ENCODE measurements at regions of chr11 and their contacts with region 1.

Region 1: DNA sequence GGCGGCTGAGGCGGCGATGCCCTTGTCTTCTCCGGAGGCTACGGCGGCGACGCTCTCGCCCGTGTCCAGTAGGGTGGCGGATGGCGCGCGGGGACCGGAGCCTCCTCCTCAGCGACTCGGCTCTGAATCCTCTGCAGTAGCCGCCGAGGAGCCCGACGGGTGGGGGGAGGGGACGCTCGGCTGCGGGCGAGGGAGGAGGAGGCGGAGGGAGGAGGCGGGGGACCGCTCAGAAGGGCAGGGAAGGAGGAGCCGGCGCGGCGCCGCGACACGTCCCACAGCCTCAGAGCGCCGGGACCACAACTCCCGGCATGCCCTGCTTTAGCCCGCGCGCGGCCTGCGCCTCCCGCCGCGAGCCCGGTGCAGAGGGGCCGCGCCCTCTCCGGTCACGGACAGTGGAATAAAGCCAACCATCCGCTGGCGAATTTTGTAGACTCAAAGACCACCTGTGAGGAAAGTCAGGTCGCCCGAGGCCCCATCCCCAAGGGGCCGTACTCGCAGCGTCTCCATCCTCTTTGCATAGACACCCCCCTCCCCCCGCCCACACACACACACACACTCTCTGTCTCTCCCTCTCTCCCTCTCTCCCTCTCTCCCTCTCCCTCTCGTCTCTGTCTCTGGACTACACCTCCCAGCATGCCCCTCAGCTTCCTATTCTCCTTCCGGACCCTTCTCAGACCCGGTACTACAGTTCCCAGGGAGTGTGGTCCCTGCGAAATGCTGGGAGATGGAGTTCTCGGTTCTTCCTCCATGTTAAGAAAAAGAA is at the start of gene FAM168A:
- DNase-seq: peak; percentile 88
- H3K4me3 Mint-ChIP-seq: peak within 1 kb of the TSS; percentile 93
- H3K27ac Mint-ChIP-seq: peak within 1 kb of the TSS; percentile 94
- H3K4me1 Mint-ChIP-seq: peaks cover 37% of the 10 kb centered on the region
- H3K27me3 Mint-ChIP-seq: peaks cover 2% of the 10 kb centered on the region
- total RNA-seq, gene FAM168A: 19.4 and 19.5 TPM in 2 replicates

Region 2: DNA sequence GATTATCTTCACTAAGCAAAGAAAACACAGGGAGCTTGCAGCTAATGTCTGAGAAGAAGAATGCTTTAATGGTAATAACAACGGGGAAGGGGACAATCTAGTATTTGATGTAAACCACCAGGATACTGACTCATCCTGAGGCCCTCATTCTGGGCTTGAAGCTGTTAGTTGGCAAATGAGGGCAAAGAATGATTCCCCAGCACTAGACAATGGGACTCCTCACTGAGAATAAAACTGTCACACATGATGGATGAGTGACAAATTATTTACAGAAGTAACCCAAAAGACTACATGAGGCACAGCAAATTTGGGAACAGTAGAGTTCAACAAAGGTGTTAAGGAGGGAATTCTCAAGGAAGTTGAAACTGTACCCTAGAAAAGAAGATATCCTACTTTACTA is 76.5 kb before region 1 on chr11:
- intact Hi-C with region 1: loop called (anchors 5 kb)
- DNase-seq: no peak
- H3K4me3 Mint-ChIP-seq: peak overlapping the region; percentile 23
- H3K27ac Mint-ChIP-seq: peak overlapping the region; percentile 64
- H3K4me1 Mint-ChIP-seq: peaks cover 35% of the 10 kb centered on the region
- H3K27me3 Mint-ChIP-seq: no peaks in the 10 kb centered on the region

Region 3: DNA sequence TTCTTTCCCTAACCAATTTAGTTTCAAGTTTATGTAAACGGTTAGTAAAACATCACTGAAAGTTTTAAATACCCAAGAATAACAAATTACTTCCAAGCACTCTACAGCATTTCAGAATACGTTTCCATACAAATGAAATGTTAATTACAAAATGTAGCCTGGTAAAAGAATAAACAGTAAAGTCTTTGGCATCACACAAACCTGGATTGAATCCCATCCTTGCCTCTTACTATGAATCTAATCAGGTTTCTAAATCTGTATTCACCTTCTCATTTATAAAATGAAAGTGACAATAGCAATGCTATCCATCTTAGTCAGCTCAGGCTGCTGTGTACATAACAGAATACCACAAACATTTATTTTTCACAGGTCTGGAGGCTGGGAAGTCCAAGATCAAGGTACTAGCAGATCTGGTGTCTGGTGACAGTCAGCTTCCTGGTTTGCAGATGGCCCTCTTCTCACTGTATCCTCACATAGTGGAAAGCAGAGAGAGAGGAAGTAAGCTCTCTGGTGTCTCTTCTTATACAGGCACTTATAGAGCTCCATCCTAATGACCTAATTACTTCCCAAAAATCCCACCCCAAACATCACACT is 19.4 kb before region 1 on chr11:
- intact Hi-C with region 1: loop called (anchors 1 kb)
- DNase-seq: no peak
- H3K4me3 Mint-ChIP-seq: no peak overlapping the region
- H3K27ac Mint-ChIP-seq: peak overlapping the region; percentile 52
- H3K4me1 Mint-ChIP-seq: peaks cover 28% of the 10 kb centered on the region
- H3K27me3 Mint-ChIP-seq: no peaks in the 10 kb centered on the region

Region 4: GRCh38 chr11:73760679-73761402 is 162.7 kb after region 1 on chr11 and contains the start of gene RAB6A:
- intact Hi-C with region 1: loop called (anchors 1 kb)
- DNase-seq: peak; percentile 100
- H3K4me3 Mint-ChIP-seq: peak within 1 kb of the TSS; percentile 98
- H3K27ac Mint-ChIP-seq: peak within 1 kb of the TSS; percentile 97
- H3K4me1 Mint-ChIP-seq: peaks cover 41% of the 10 kb centered on the region
- H3K27me3 Mint-ChIP-seq: peaks cover 3% of the 10 kb centered on the region
- total RNA-seq, gene RAB6A: 81.9 and 88.0 TPM in 2 replicates

Region 5: GRCh38 chr11:73876424-73877300 is 278.5 kb after region 1 on chr11 and contains the starts of genes COA4 and PAAF1:
- intact Hi-C with region 1: loop called (anchors 1 kb)
- DNase-seq: peak; percentile 92
- H3K4me3 Mint-ChIP-seq: peak within 1 kb of the TSS; percentile 93
- H3K27ac Mint-ChIP-seq: peak within 1 kb of the TSS; percentile 100
- H3K4me1 Mint-ChIP-seq: peaks cover 30% of the 10 kb centered on the region
- H3K27me3 Mint-ChIP-seq: no peaks in the 10 kb centered on the region
- total RNA-seq, gene COA4: 99.1 and 102 TPM in 2 replicates
- total RNA-seq, gene PAAF1: 22.4 and 25.0 TPM in 2 replicates

Region 6: DNA sequence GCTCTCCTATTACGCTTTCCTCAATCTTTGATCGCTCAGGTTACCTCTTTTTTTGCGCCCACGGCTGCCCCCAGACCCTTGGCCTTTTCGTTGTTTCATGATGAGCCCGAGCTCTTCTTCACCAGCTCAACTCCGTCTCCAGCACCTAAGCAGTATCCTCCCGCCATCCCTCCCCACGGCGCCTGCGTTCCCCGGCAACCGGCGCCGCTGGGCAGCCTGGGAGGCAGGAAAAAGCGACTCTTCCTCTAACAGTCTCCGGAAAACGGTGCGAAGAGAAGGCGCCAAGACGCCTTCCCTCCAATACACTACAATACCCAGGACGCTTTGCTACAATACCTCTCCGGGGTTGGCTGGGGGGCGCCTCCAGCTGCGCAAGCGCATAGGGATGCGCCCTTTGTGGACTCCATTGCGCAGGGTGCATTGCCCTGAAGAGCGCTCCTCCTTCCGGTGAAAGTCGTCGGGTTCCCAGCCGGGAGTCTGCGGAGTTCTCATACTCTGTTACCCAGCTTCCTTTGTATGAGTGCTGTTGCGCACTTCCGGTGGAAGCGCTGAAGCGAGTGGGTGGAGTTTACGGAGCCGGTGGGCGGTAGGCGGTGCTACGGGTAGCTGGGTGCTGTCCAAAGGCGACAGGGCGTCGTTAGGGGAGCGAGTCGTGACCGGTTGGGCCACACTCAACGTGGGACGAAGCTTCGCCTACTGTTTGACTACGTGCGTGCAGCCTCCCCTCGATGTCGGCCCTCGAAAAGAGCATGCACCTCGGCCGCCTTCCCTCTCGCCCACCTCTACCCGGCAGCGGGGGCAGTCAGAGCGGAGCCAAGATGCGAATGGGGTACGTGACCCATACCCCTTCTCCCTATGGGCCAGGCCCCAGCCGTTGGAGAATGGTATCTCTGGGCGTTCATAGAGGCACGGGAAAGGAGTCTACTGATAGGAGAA is 572.8 kb after region 1 on chr11 and contains the starts of genes C2CD3 and PPME1:
- intact Hi-C with region 1: loop called (anchors 1 kb)
- DNase-seq: peak; percentile 99
- H3K4me3 Mint-ChIP-seq: no peak within 1 kb of the TSS
- H3K27ac Mint-ChIP-seq: no peak within 1 kb of the TSS
- H3K4me1 Mint-ChIP-seq: peaks cover 11% of the 10 kb centered on the region
- H3K27me3 Mint-ChIP-seq: no peaks in the 10 kb centered on the region
- total RNA-seq, gene C2CD3: 46.5 and 49.5 TPM in 2 replicates
- total RNA-seq, gene PPME1: 64.8 and 68.1 TPM in 2 replicates

Measured in activated T-helper 1 cell treated with anti-CD3 and anti-CD28 coated beads, Interleukin-12 subunit alpha, Interleukin-12 subunit beta, Interleukin-2, Interleukin-4 antibody, amounts not matched to agents 30 ng/mL and 10 ng/mL and 1 ng/mL, durations not matched to agents 14 hours and 24 hours and 36 hours (primary cell).